ENCODE measurements at regions of chr9 and their contacts with region 1.

Region 1: GRCh38 chr9:88593537-88594185 is 58.7 kb downstream of the NXNL2 start:
- DNase-seq: peak; percentile 13 to 69 (median 50)
- ATAC-seq: peak; percentile 64
- H3K4me3 ChIP-seq: no peak overlapping the region
- H3K4me3 Mint-ChIP-seq: no peak overlapping the region
- H3K27ac ChIP-seq: no peak overlapping the region
- H3K27ac Mint-ChIP-seq: no peak overlapping the region
- H3K4me1 ChIP-seq: no peaks in the 10 kb centered on the region
- H3K4me1 Mint-ChIP-seq: peaks cover 4% of the 10 kb centered on the region
- H3K27me3 ChIP-seq: no peaks in the 10 kb centered on the region
- H3K27me3 Mint-ChIP-seq: peaks cover 19% of the 10 kb centered on the region
- CTCF ChIP-seq: peak; percentile 71

Region 2: DNA sequence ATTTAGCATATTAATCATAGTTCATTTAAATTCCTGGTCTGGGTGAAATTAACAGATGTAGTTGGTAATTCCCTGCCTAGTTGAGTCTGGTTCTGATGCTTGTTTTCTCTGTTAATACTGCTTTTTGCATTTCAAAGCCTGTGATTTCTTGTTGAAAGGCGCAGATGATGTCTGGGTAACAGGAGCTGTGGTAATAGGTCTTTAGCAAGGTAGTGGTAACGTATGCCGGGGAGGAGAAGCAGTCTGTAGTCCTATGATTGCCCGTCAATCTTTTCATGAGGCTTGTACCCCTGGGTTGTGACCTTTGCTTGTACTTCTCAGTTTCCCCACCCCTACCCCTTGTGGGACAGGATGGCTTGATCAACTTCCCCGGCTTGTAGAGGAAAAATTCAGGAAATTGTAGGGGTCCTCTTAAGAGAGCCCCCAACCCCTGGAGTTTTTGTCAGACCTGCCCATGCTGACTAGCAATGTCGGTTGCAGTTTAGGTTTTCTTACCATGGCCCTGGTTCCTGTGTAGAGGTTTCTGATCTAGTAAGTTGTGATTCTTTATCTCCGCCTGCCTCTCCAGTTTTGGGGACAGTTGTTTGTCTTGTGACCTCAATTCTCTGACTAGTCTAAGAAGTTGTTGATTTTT is 150.1 kb before region 1 on chr9:
- CTCF ChIA-PET with region 1: no interaction called
- POLR2A ChIA-PET with region 1: no interaction called
- intact Hi-C with region 1: no loop called
- DNase-seq: no peak
- ATAC-seq: no peak
- H3K4me3 ChIP-seq: no peak overlapping the region
- H3K4me3 Mint-ChIP-seq: no peak overlapping the region
- H3K27ac ChIP-seq: no peak overlapping the region
- H3K27ac Mint-ChIP-seq: no peak overlapping the region
- H3K4me1 ChIP-seq: peaks cover 10% of the 10 kb centered on the region
- H3K4me1 Mint-ChIP-seq: peaks cover 55% of the 10 kb centered on the region
- H3K27me3 ChIP-seq: no peaks in the 10 kb centered on the region
- H3K27me3 Mint-ChIP-seq: no peaks in the 10 kb centered on the region
- CTCF ChIP-seq: no peak

Region 3: DNA sequence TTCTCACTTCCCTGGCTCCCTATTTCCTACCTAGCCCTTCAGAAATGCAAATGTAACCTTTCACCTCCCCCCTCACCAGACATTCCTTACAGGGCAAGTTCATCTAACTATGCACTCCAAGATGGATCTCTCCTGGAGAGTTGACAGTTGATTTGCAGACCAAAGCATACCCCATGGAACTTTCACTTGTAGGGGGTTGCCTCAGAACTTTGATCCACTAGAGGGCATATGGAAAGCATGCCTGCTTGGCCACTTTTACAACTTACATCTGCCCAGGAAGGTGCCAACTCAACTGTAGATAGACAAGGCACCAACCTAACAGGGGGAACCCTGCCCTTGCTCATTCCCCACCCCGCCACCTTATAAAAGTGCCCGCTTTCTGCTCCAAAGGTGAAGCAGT is 129.1 kb after region 1 on chr9:
- CTCF ChIA-PET with region 1: no interaction called
- POLR2A ChIA-PET with region 1: no interaction called
- intact Hi-C with region 1: loop called in 1 of 2 experiments (anchors 10 kb)
- DNase-seq: peak in 1 of 9 experiments; percentile 21
- ATAC-seq: no peak
- H3K4me3 ChIP-seq: no peak overlapping the region
- H3K4me3 Mint-ChIP-seq: no peak overlapping the region
- H3K27ac ChIP-seq: no peak overlapping the region
- H3K27ac Mint-ChIP-seq: no peak overlapping the region
- H3K4me1 ChIP-seq: no peaks in the 10 kb centered on the region
- H3K4me1 Mint-ChIP-seq: no peaks in the 10 kb centered on the region
- H3K27me3 ChIP-seq: no peaks in the 10 kb centered on the region
- H3K27me3 Mint-ChIP-seq: peaks cover 18% of the 10 kb centered on the region
- CTCF ChIP-seq: no peak

Region 4: DNA sequence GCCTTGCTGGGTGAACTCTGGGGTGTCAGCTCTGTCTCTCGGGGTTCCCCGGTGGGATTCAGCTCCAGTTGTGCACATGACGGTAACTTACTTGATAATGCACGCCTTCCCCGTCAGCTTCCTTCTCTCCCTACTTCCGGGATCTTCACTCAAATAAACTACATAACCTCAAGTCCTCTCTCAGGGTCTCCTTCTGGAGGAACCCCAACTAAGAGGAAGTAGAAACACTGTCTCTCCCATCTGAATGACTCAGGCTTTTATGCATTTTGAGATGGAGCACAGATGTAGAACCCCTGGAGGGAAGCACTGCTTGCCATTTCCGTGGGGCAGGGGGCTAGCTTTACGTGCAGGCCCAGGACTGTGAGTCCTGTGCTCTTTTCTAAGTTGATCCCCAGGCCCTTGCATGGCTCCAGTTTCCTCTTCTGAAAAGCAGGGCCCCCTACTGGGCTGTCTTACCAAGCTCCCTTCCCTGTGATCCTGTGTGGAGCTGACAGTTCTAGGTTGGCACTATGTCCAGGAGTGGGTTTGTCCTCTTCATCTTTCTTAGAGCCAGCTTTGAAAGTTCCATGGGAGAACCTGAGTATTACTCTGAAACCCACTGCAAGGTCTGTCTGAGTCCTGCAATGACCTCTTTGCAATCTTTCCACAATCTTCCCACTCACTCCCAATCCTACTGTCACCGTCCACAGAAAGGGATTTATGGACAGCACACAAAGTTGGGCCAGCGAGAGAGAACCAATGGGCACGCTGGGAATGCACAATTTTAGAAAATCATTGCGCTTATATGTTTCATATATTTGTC is 415.3 kb after region 1 on chr9:
- CTCF ChIA-PET with region 1: interaction called, 10 read pairs
- POLR2A ChIA-PET with region 1: no interaction called
- intact Hi-C with region 1: no loop called
- DNase-seq: no peak
- ATAC-seq: no peak
- H3K4me3 ChIP-seq: no peak overlapping the region
- H3K4me3 Mint-ChIP-seq: no peak overlapping the region
- H3K27ac ChIP-seq: no peak overlapping the region
- H3K27ac Mint-ChIP-seq: no peak overlapping the region
- H3K4me1 ChIP-seq: no peaks in the 10 kb centered on the region
- H3K4me1 Mint-ChIP-seq: no peaks in the 10 kb centered on the region
- H3K27me3 ChIP-seq: no peaks in the 10 kb centered on the region
- H3K27me3 Mint-ChIP-seq: peaks cover 4% of the 10 kb centered on the region
- CTCF ChIP-seq: no peak

Region 5: GRCh38 chr9:89278997-89279739 is 685.5 kb after region 1 on chr9:
- CTCF ChIA-PET with region 1: no interaction called
- POLR2A ChIA-PET with region 1: no interaction called
- intact Hi-C with region 1: loop called in 1 of 2 experiments (anchors 2 kb)
- DNase-seq: peak in 3 of 9 experiments; percentile 17 to 53 (median 42)
- ATAC-seq: peak; percentile 36
- H3K4me3 ChIP-seq: no peak overlapping the region
- H3K4me3 Mint-ChIP-seq: no peak overlapping the region
- H3K27ac ChIP-seq: no peak overlapping the region
- H3K27ac Mint-ChIP-seq: no peak overlapping the region
- H3K4me1 ChIP-seq: peaks cover 17% of the 10 kb centered on the region
- H3K4me1 Mint-ChIP-seq: peaks cover 25% of the 10 kb centered on the region
- H3K27me3 ChIP-seq: no peaks in the 10 kb centered on the region
- H3K27me3 Mint-ChIP-seq: no peaks in the 10 kb centered on the region
- CTCF ChIP-seq: peak; percentile 68